Mammary epithelial cell (primary cell): ENCODE measurements at regions of chr3 and their contacts with region 1.

Region 1: DNA sequence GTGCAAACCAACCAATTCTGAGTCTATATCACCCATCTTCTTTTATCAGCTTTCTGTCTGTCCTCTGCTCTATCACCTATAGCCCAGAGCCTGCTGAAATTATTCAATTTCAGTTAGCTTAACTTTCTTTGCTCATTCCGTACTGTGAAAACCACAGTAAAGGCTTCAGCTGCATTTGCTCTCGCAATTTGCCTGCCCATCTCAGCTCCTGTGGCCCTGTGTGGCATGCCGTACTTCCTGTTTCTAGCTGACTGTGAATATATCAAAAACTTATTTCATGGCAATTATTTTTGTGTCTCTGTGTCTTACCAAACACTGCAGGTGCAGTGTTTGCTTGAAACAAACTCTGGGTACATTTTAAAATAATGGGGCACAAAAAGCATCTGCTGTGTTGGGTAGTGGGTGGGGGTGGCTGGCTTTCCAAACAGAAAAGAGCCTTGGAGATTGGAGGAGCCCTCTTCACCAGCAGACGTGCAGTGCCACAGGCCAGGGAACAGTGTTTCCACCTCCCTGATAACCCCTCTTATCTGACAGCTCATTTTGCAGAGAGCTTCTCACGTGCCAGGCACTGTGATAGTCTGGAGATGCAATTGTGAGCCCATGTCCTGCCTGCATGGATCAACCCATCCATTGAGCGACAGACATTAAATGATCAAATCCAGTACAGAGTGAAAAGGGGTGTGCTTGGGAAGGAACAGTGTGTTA is 45.2 kb downstream of the GASK1A start:
- DNase-seq: no peak
- H3K4me3 ChIP-seq: no peak overlapping the region
- H3K27ac ChIP-seq: no peak overlapping the region
- H3K4me1 ChIP-seq: no peaks in the 10 kb centered on the region
- H3K27me3 ChIP-seq: no peaks in the 10 kb centered on the region
- CTCF ChIP-seq: no peak

Region 2: GRCh38 chr3:42790714-42791229 is 233.6 kb before region 1 on chr3:
- CTCF ChIA-PET with region 1: no interaction called
- dilution Hi-C with region 1: no loop called
- in situ Hi-C with region 1: no loop called
- intact Hi-C with region 1: no loop called
- DNase-seq: no peak
- H3K4me3 ChIP-seq: no peak overlapping the region
- H3K27ac ChIP-seq: no peak overlapping the region
- H3K4me1 ChIP-seq: no peaks in the 10 kb centered on the region
- H3K27me3 ChIP-seq: no peaks in the 10 kb centered on the region
- CTCF ChIP-seq: no peak

Region 3: DNA sequence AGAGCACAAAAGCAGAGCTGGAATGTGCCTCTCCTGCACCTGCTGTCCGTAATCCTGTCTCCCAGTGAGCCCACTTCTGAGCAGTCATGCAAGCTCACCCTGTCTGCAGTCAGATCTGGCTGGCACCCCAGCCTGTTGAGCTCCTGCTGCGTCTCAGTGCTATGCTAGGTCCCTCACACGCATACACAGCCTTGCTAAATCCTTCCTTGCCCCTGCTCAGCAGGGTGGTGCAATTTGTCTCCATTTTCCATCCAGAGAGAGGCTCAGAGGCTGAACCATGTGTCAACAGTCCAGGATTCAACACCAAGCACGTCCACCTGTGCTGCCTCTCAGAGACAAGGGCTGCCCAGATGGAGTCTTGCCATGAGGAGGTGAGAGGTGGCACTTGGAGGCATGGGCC is 70.5 kb after region 1 on chr3:
- CTCF ChIA-PET with region 1: no interaction called
- dilution Hi-C with region 1: loop called (anchors 5 kb)
- in situ Hi-C with region 1: no loop called
- intact Hi-C with region 1: no loop called
- DNase-seq: no peak
- H3K4me3 ChIP-seq: no peak overlapping the region
- H3K27ac ChIP-seq: no peak overlapping the region
- H3K4me1 ChIP-seq: no peaks in the 10 kb centered on the region
- H3K27me3 ChIP-seq: no peaks in the 10 kb centered on the region
- CTCF ChIP-seq: no peak

Region 4: GRCh38 chr3:43785551-43785950 is 761.2 kb after region 1 on chr3:
- CTCF ChIA-PET with region 1: no interaction called
- dilution Hi-C with region 1: no loop called
- in situ Hi-C with region 1: no loop called
- intact Hi-C with region 1: no loop called
- DNase-seq: no peak
- H3K4me3 ChIP-seq: no peak overlapping the region
- H3K27ac ChIP-seq: no peak overlapping the region
- H3K4me1 ChIP-seq: no peaks in the 10 kb centered on the region
- H3K27me3 ChIP-seq: no peaks in the 10 kb centered on the region
- CTCF ChIP-seq: no peak

Region 5: DNA sequence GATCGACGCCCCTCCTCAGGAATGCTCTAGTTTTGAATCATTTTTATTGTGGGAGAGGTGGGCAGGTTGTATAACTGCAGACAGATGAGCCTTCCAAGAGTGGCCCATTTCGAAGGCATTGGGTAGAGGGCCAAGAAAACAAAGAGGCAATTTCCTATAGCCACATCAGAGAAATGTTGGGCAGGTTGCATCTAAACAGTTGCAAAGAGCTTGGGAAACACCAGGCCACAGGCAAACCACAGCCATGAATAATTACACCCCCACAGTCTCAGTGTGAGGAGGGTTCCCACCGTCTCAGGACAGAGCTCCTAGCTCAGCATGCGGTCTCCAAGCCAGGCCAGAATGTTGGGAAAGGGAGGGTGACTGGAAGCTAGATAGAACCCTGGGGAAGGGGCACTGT is 923.7 kb after region 1 on chr3:
- CTCF ChIA-PET with region 1: no interaction called
- dilution Hi-C with region 1: no loop called
- in situ Hi-C with region 1: no loop called
- intact Hi-C with region 1: no loop called
- DNase-seq: peak; percentile 9
- H3K4me3 ChIP-seq: no peak overlapping the region
- H3K27ac ChIP-seq: no peak overlapping the region
- H3K4me1 ChIP-seq: no peaks in the 10 kb centered on the region
- H3K27me3 ChIP-seq: peaks cover 2% of the 10 kb centered on the region
- CTCF ChIP-seq: no peak